Aorta (tissue), 5 donors: ENCODE measurements at regions of chr12 and their contacts with region 1.

Region 1: DNA sequence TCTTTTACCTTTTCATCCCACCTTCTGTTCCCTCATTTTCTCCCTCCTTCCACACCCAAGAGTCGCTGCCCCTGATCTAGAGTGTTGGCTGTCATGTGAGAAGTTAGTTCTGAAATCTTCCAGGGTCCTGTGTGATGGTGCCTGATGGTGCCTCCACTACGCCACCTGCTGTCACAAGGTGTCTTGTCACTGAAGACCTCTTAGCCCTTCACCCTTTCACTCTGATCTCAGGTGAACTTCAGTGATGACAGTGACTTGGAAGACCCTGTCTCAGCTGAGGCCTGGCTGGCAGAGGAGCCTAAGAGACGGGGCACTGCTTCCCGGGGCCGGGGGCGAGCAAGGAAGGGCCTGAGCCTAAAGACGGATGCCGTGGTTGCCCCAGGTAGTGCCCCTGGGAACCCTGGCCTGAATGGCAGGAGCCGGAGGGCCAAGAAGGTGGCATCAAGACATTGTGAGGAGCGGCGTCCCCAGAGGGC is 7.6 kb upstream of the PFDN5 start:
- DNase-seq: peak; percentile 66 to 91
- ATAC-seq: peak; percentile 63
- H3K4me3 ChIP-seq: no peak overlapping the region
- H3K27ac ChIP-seq: no peak overlapping the region
- H3K4me1 ChIP-seq: no peaks in the 10 kb centered on the region
- H3K27me3 ChIP-seq: no peaks in the 10 kb centered on the region

Region 2: GRCh38 chr12:53213348-53213747 is 74.4 kb before region 1 on chr12:
- intact Hi-C with region 1: loop called (anchors 1 to 2 kb)
- DNase-seq: peak; percentile 89 to 94
- ATAC-seq: peak; percentile 79
- H3K4me3 ChIP-seq: no peak overlapping the region
- H3K27ac ChIP-seq: no peak overlapping the region
- H3K4me1 ChIP-seq: no peaks in the 10 kb centered on the region
- H3K27me3 ChIP-seq: no peaks in the 10 kb centered on the region